Sigmoid colon (tissue), 7 donors: ENCODE measurements at regions of chr11 and their contacts with region 1.

Region 1: DNA sequence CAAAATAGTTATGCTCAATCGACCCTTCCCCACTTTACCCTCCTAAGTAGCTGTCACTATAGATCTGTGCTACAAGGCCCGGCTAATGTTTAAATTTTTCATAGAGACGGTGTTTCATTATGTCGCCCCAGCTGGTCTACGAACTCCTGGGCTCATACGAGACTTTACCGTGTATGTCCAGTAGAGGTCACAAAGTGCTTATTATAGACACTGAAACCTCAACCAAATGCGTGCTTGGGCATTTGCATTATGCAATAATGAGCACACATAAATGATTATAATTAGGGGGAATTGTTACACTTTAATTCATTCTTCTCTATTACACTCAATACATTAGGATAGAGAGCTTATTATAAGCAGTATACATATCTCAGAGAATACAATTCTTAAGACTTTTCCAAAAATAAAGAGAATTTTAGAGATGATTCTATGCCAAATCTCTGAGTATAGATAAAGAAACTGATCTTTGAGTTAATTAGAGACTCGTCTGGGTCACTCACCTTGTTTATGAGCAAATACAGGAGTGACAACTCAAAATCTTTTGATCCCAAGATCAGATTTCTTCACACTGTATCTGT is 12.5 kb upstream of the MRPL16 start:
- DNase-seq: no peak
- H3K4me3 ChIP-seq: no peak overlapping the region
- H3K27ac ChIP-seq: no peak overlapping the region
- H3K4me1 ChIP-seq: no peaks in the 10 kb centered on the region
- H3K27me3 ChIP-seq: no peaks in the 10 kb centered on the region
- CTCF ChIP-seq: peak in 3 of 4 experiments; percentile 33 to 46 (median 43)
- EP300 ChIP-seq: no peak
- POLR2A ChIP-seq: no peak

Region 2: GRCh38 chr11:60193687-60194433 is 370.8 kb after region 1 on chr11:
- intact Hi-C with region 1: loop called (anchors 10 kb)
- DNase-seq: no peak
- H3K4me3 ChIP-seq: no peak overlapping the region
- H3K27ac ChIP-seq: peak overlapping the region in 1 of 4 donors; percentile 13
- H3K4me1 ChIP-seq: no peaks in the 10 kb centered on the region
- H3K27me3 ChIP-seq: no peaks in the 10 kb centered on the region
- CTCF ChIP-seq: peak; percentile 43 to 63 (median 54)
- EP300 ChIP-seq: no peak
- POLR2A ChIP-seq: no peak